Mammary epithelial cell (primary cell): ENCODE measurements at regions of chr22 and their contacts with region 1.

Region 1: GRCh38 chr22:49638788-49639187 is 188.9 kb downstream of the BRD1 start:
- DNase-seq: no peak
- H3K4me3 ChIP-seq: no peak overlapping the region
- H3K27ac ChIP-seq: no peak overlapping the region
- H3K4me1 ChIP-seq: no peaks in the 10 kb centered on the region
- H3K27me3 ChIP-seq: no peaks in the 10 kb centered on the region
- CTCF ChIP-seq: no peak

Region 2: DNA sequence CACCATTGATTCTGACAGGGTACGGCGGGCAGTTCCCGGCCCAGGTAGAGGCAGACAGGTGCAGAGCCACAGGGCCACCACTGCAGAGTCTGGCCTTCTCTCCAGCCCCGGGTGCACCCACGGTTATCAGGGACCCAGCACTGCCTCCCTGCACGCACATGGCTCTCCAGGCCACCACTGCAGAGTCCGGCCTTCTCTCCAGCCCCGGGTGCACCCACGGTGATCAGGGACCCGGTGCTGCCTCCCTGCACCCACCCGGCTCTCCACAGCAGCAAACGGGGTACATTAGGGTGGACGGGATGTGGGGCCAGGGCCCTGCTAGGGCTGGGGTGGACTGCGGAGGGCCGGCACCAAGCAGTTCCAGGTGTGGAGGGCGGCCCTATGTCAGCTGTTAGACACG is 84.0 kb before region 1 on chr22:
- CTCF ChIA-PET with region 1: no interaction called
- dilution Hi-C with region 1: loop called (anchors 5 kb)
- in situ Hi-C with region 1: no loop called
- intact Hi-C with region 1: no loop called
- DNase-seq: no peak
- H3K4me3 ChIP-seq: no peak overlapping the region
- H3K27ac ChIP-seq: no peak overlapping the region
- H3K4me1 ChIP-seq: no peaks in the 10 kb centered on the region
- H3K27me3 ChIP-seq: no peaks in the 10 kb centered on the region
- CTCF ChIP-seq: no peak

Region 3: DNA sequence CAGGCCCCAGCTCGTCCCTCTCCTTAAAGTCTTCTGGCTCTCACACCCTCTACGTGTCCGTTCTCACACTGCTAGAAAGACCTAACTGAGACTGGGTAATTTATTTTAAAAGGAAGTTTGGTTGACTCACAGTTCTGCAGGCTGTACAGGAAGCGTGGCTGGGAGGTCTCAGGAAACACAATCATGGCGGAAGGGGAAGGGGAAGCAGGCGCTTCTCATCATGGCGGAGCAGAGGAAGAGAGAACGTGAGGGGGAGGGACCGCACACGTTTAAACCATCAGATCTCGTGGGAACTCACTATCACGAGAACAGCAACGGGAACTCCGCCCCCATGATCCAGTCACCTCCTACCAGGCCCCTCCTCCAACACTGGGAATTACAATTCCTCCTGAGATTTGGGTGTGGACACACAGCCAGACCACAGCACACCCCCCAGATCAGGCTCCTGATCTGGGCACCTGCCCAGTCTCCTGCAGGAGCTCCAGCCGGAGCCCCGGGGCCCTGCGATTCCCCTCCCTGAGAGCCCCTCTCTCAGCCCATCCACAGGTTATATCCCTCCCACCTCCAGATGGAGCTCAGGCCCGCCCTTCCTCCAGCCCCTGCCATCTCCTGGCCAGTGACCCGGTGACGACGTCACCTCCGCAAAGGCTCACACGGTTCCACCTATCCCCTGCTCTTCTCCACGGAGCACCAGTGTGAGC is 18.6 kb after region 1 on chr22:
- CTCF ChIA-PET with region 1: no interaction called
- dilution Hi-C with region 1: no loop called
- in situ Hi-C with region 1: no loop called
- intact Hi-C with region 1: no loop called
- DNase-seq: no peak
- H3K4me3 ChIP-seq: no peak overlapping the region
- H3K27ac ChIP-seq: no peak overlapping the region
- H3K4me1 ChIP-seq: no peaks in the 10 kb centered on the region
- H3K27me3 ChIP-seq: no peaks in the 10 kb centered on the region
- CTCF ChIP-seq: no peak

Region 4: GRCh38 chr22:49683032-49683431 is 44.2 kb after region 1 on chr22:
- CTCF ChIA-PET with region 1: no interaction called
- dilution Hi-C with region 1: loop called (anchors 5 kb)
- in situ Hi-C with region 1: no loop called
- intact Hi-C with region 1: no loop called
- DNase-seq: no peak
- H3K4me3 ChIP-seq: no peak overlapping the region
- H3K27ac ChIP-seq: no peak overlapping the region
- H3K4me1 ChIP-seq: no peaks in the 10 kb centered on the region
- H3K27me3 ChIP-seq: no peaks in the 10 kb centered on the region
- CTCF ChIP-seq: no peak